Activated B cell treated with CpG ODN at 0.5 μM for 24 hours (primary cell): ENCODE measurements at regions of chr5 and their contacts with region 1.

Region 1: DNA sequence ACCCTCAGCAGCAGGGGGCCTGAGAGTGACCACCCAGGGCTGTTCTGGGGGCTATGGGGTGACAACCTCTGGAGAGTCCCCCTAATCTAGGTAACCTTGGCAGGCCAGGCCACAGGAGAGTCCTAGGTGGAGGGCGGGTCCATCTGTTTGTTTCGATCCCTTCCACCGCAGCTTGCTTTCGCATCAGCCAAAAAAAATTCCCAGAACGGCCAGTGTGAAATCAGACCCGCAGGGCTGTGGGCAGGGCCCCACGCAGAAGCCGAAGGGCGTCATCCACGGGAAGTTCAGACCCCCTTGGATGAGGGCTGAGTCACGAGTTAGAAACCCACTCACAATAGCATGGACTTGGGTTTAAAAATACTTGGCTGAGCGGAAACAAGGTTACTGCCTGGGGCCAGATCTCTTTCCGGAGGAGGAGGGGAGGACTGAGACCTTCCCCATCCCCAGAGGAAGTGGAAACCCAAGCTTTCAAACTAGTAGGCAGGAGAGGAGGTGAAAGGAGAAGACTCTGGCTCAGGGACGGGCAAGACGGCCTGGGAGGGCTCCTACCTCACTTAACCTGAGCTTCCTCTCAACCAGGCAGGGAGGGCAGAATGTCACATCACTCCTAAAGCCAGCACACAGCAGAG is 8.5 kb downstream of the STK10 start:
- DNase-seq: no peak
- ATAC-seq: peak; percentile 7
- H3K4me3 Mint-ChIP-seq: peak overlapping the region; percentile 78
- H3K27ac Mint-ChIP-seq: peak overlapping the region; percentile 96
- H3K4me1 Mint-ChIP-seq: peaks cover 90% of the 10 kb centered on the region
- H3K27me3 Mint-ChIP-seq: no peaks in the 10 kb centered on the region
- CTCF ChIP-seq: no peak

Region 2: DNA sequence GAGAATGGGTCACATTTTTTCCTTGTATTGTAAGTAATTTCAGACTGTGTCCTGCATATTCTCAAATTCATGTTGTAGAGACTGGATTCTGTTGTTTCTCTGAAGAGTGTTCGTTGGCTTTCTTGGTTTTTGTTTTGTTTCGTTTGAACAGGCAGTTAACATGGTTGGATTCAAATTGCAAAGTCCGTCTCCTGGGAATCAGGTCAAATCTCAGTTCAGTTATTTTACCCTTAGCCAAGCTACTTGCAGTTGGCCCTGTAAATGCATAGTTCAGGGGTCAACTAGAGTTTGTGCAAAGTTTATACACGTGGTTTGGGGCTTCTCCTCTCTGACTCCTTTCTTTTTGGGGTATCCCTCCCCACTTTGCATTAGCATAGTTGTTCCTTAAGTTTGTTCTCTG is 151.3 kb before region 1 on chr5:
- CTCF ChIA-PET with region 1: no interaction called
- POLR2A ChIA-PET with region 1: no interaction called
- intact Hi-C with region 1: no loop called
- DNase-seq: no peak
- ATAC-seq: no peak
- H3K4me3 Mint-ChIP-seq: no peak overlapping the region
- H3K27ac Mint-ChIP-seq: no peak overlapping the region
- H3K4me1 Mint-ChIP-seq: peaks cover 5% of the 10 kb centered on the region
- H3K27me3 Mint-ChIP-seq: no peaks in the 10 kb centered on the region
- CTCF ChIP-seq: no peak

Region 3: DNA sequence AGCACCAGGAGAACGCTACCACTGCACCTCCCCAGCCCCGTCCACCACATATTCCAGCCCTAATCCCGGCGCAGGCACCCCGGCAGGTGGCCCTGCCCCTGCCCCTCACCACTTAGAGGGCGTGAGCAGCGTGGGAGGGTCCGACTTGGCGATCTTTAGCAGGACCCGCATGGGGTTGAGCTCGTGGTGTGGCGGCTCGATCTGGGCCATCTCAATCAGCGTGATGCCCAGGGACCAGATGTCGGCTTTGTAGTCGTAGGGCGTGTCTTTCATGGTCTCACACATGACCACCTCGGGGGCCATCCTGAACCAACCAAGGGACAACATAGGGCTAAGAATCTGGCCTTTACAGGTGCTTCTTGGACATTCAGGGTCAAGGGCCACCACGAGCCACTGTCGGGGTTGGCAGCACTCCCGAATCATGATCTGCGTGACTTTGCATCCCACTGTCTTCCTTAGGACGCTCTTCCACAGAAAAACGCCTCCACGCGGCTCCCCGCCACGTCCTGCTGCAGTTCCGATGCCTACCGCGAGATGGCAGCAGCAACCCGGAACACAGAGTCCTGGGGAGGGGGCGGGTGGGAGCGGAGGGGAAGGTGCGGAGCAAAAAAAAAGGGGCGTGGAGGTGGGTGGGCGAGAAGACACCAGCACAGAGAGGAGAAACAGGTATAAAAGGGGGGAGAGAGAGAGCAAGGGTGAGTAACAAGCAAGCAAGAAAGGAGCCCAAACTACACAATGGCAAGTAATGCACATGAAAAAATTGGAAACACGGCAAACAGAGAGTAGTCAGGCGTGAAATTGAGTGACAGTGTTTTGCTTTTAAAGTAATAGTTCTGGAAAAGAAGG is 72.7 kb before region 1 on chr5:
- CTCF ChIA-PET with region 1: interaction called, 7 read pairs
- POLR2A ChIA-PET with region 1: interaction called, 69 read pairs
- intact Hi-C with region 1: loop called (anchors 1 kb)
- DNase-seq: peak; percentile 71
- ATAC-seq: no peak
- H3K4me3 Mint-ChIP-seq: no peak overlapping the region
- H3K27ac Mint-ChIP-seq: peak overlapping the region; percentile 68
- H3K4me1 Mint-ChIP-seq: peaks cover 41% of the 10 kb centered on the region
- H3K27me3 Mint-ChIP-seq: no peaks in the 10 kb centered on the region
- CTCF ChIP-seq: peak; percentile 34

Region 4: GRCh38 chr5:172114875-172115422 is 64.5 kb before region 1 on chr5:
- CTCF ChIA-PET with region 1: interaction called, 7 read pairs
- POLR2A ChIA-PET with region 1: interaction called, 69 read pairs
- intact Hi-C with region 1: loop called (anchors 1 kb)
- DNase-seq: peak; percentile 67
- ATAC-seq: peak; percentile 49
- H3K4me3 Mint-ChIP-seq: peak overlapping the region; percentile 80
- H3K27ac Mint-ChIP-seq: peak overlapping the region; percentile 95
- H3K4me1 Mint-ChIP-seq: peaks cover 70% of the 10 kb centered on the region
- H3K27me3 Mint-ChIP-seq: no peaks in the 10 kb centered on the region
- CTCF ChIP-seq: no peak

Region 5: GRCh38 chr5:172144291-172144815 is 35.1 kb before region 1 on chr5:
- CTCF ChIA-PET with region 1: no interaction called
- POLR2A ChIA-PET with region 1: interaction called, 10 read pairs
- intact Hi-C with region 1: no loop called
- DNase-seq: no peak
- ATAC-seq: peak; percentile 92
- H3K4me3 Mint-ChIP-seq: peak overlapping the region; percentile 7
- H3K27ac Mint-ChIP-seq: peak overlapping the region; percentile 85
- H3K4me1 Mint-ChIP-seq: peaks cover 73% of the 10 kb centered on the region
- H3K27me3 Mint-ChIP-seq: no peaks in the 10 kb centered on the region
- CTCF ChIP-seq: no peak

Region 6: DNA sequence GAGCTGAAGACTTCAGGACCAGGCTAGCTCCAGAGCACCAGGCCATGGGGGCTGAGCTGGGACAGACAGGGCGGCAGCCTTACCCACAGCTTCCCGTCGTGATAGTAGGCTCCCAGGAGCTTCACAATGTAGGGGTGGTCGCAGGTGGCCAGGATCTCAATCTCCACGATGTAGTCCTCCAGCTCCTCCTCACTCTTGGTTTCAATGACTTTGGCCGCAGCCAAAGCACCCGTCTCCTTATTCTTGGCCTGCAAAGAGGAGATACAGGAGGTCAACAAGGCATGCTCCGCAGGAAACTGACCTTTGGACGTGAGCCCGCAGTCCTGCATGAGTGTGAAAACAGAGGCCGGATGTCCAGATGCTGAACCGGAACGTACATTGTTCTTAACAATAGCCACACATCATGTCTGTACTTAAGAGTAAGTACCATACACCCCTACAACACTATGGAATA is 22.9 kb before region 1 on chr5:
- CTCF ChIA-PET with region 1: no interaction called
- POLR2A ChIA-PET with region 1: interaction called, 15 read pairs
- intact Hi-C with region 1: loop called (anchors 2 kb)
- DNase-seq: no peak
- ATAC-seq: no peak
- H3K4me3 Mint-ChIP-seq: no peak overlapping the region
- H3K27ac Mint-ChIP-seq: peak overlapping the region; percentile 13
- H3K4me1 Mint-ChIP-seq: peaks cover 85% of the 10 kb centered on the region
- H3K27me3 Mint-ChIP-seq: no peaks in the 10 kb centered on the region
- CTCF ChIP-seq: no peak

Region 7: GRCh38 chr5:172164769-172165212 is 14.7 kb before region 1 on chr5:
- CTCF ChIA-PET with region 1: no interaction called
- POLR2A ChIA-PET with region 1: interaction called, 13 read pairs
- intact Hi-C with region 1: loop called (anchors 1 kb)
- DNase-seq: no peak
- ATAC-seq: no peak
- H3K4me3 Mint-ChIP-seq: no peak overlapping the region
- H3K27ac Mint-ChIP-seq: peak overlapping the region; percentile 68
- H3K4me1 Mint-ChIP-seq: peaks cover 87% of the 10 kb centered on the region
- H3K27me3 Mint-ChIP-seq: no peaks in the 10 kb centered on the region
- CTCF ChIP-seq: no peak

Region 8: GRCh38 chr5:172334196-172334595 is 154.7 kb after region 1 on chr5:
- CTCF ChIA-PET with region 1: no interaction called
- POLR2A ChIA-PET with region 1: no interaction called
- intact Hi-C with region 1: no loop called
- DNase-seq: no peak
- ATAC-seq: no peak
- H3K4me3 Mint-ChIP-seq: no peak overlapping the region
- H3K27ac Mint-ChIP-seq: no peak overlapping the region
- H3K4me1 Mint-ChIP-seq: no peaks in the 10 kb centered on the region
- H3K27me3 Mint-ChIP-seq: peaks cover 5% of the 10 kb centered on the region
- CTCF ChIP-seq: no peak